ENCODE measurements at regions of chr14 and their contacts with region 1.

Region 1: DNA sequence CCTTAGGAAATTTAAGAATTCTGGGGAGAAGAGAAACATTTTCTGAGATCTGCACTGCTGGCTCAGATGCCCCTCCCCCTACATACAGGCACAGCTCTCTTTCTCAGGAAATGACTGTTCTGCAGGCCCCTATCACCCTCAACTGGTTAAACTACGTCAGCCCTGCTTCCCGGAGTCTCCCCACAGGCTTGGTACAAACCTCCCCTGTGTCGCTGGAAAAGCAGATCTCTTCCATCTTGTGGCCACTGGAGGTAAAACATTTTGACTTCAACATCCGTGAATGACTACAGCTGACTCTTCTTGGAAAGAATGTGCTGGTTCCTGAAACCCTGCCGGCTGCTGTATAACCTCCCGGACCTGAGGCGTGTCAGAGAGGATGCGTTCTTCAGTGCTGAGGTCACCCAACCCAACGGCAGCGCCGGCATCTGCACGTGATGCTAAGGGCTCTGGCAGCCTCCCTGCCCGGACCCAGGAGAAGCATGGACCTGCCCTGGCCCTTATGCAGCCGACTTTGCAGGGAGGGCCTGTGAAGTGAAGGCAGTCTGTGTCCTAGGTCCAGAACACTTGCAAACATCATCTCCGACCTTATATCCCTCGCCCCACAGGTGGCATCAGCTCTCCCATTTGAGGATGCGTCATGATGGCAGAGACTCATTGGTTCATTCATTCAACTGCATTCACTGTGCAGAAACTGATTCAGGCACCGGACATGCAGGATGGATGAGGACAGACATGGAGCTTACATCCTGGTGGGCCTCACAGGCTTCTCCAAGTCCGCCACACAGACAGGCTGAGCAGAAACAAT is 129.3 kb downstream of the GCH1 start:
- DNase-seq: peak; percentile 93
- ATAC-seq: peak; percentile 83
- H3K4me3 Mint-ChIP-seq: peak overlapping the region; percentile 16
- H3K27ac Mint-ChIP-seq: peak overlapping the region; percentile 79
- H3K4me1 Mint-ChIP-seq: peaks cover 47% of the 10 kb centered on the region
- H3K27me3 Mint-ChIP-seq: peaks cover 9% of the 10 kb centered on the region
- CTCF ChIP-seq: no peak

Region 2: DNA sequence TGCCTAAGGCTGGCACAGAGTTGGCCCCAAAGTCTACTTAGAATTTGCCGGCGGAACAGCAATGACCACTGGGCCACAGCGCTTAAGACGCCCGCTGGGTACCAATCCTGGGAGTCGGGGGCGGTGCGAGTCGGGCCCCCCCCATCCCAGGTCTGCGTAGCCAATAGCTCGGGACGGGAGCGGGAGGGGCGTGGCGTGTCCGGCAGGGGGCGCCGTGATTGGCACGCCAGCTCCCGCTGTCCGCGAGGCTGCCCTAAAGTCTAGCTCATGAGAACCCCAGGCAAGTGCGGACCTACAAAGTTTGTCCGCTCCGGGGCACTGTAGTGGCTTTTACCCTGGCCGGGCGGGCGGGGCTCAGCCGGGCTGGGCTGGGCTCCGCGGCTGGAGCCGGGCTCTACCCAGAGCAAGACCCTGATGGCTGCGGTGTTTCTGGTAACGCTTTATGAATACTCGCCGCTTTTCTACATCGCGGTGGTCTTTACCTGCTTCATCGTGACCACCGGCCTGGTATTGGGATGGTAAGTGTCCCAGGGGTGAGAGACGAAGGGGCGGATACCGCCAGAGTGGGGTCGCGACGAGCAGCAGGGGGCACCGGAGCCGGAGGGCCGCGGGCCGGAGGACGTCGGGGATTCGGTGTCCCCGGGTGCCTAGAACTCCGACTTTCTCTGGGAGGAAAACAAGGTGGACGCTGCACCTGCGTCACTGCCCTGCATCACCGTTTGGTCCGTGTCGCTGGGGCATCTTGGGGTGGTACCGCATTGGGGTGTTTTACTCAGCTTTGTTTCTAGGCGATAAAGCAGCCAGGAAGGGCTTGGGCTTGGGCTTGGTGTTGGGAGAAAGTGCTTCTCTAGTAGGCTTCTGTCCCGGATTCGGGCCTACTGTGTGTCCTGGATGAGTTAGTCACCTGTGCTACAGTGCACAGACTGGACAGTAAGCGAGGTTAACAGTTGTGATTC is 263.5 kb before region 1 on chr14 and contains the start of gene CGRRF1:
- CTCF ChIA-PET with region 1: interaction called, 20 read pairs
- POLR2A ChIA-PET with region 1: no interaction called
- intact Hi-C with region 1: no loop called
- DNase-seq: peak; percentile 99
- ATAC-seq: peak; percentile 98
- H3K4me3 Mint-ChIP-seq: peak within 1 kb of the TSS; percentile 92
- H3K27ac Mint-ChIP-seq: peak within 1 kb of the TSS; percentile 82
- H3K4me1 Mint-ChIP-seq: peaks cover 39% of the 10 kb centered on the region
- H3K27me3 Mint-ChIP-seq: peaks cover 2% of the 10 kb centered on the region
- CTCF ChIP-seq: no peak
- total RNA-seq, gene CGRRF1: 9.6 to 10.0 TPM

Region 3: DNA sequence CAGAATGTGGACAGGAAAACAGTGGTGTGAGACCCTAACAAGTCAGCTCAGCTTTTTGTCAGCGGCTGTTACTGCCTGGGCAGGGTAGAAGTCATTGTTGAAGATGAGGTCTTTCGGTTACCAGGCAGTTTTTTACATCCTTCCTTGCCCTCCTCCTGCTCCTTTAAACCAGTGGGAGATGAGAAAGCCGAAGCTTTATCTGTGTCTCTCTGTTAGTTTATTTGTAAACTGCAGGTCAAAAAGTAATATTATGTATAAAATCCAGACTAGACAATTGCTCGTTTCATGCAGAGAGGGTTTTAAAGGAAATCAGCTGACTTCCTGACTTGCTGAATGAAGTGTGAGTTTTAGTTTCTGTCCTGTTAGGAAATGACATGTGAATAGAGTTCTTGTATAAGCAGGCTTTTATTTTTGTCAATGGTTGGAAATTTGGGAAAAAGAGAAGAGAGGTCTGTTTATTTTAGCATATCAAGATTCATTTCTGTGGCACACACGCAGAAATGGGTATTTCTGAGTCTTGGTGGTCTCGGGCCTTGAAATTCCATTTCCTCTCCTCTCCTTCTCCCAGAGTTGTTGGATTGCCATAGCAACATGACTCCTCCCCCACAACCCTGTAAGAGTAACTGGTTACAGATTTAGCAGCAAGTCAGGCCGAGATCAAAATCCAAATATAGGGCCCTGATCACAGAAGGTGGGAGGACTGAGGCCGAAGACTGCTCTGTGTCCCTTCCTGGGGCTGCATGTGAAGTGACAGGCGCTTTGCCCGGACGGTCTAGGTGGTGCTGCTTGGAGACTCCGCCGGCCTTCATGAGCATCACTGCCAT is 145.6 kb before region 1 on chr14:
- CTCF ChIA-PET with region 1: interaction called, 10 read pairs
- POLR2A ChIA-PET with region 1: no interaction called
- intact Hi-C with region 1: no loop called
- DNase-seq: peak; percentile 52
- ATAC-seq: peak; percentile 76
- H3K4me3 Mint-ChIP-seq: peak overlapping the region; percentile 63
- H3K27ac Mint-ChIP-seq: peak overlapping the region; percentile 96
- H3K4me1 Mint-ChIP-seq: peaks cover 45% of the 10 kb centered on the region
- H3K27me3 Mint-ChIP-seq: no peaks in the 10 kb centered on the region
- CTCF ChIP-seq: no peak

Region 4: DNA sequence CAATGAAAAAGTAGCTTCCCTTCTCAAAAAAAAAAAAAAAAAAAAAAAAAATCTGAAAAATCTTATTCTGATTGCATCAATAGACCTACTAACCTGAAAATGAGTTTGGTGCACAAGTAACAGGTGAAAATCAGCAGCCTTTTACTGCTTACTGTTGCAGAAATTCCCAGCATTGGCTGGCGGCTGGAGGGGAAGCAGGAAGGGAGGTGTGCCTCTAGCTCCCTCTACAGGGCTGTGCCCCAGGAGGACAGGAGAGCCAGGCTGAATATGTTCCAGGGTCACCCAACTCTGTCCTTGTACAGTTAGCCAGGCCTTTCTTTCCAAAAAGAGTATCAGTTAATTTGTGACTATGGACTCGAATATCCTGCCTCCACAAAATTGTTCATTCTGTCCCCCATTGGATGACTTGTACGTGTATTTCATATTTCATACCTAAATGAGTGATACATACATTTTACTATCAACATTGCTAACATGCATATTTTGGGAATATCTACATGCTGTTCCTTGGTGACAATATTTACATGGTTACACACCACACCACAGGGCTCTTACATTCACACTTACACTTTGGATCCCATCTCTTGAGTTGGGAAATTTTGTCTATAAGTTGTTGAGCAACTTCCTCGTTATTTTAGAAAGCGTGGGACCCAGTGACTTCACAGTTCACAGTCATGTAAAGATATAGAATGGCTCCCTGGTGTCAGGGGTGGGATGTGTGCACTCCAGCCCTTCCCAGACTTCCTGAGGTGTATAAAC is 81.7 kb before region 1 on chr14:
- CTCF ChIA-PET with region 1: interaction called, 22 read pairs
- POLR2A ChIA-PET with region 1: no interaction called
- intact Hi-C with region 1: no loop called
- DNase-seq: peak; percentile 70
- ATAC-seq: peak; percentile 64
- H3K4me3 Mint-ChIP-seq: no peak overlapping the region
- H3K27ac Mint-ChIP-seq: no peak overlapping the region
- H3K4me1 Mint-ChIP-seq: peaks cover 24% of the 10 kb centered on the region
- H3K27me3 Mint-ChIP-seq: peaks cover 30% of the 10 kb centered on the region
- CTCF ChIP-seq: peak; percentile 76

Region 5: DNA sequence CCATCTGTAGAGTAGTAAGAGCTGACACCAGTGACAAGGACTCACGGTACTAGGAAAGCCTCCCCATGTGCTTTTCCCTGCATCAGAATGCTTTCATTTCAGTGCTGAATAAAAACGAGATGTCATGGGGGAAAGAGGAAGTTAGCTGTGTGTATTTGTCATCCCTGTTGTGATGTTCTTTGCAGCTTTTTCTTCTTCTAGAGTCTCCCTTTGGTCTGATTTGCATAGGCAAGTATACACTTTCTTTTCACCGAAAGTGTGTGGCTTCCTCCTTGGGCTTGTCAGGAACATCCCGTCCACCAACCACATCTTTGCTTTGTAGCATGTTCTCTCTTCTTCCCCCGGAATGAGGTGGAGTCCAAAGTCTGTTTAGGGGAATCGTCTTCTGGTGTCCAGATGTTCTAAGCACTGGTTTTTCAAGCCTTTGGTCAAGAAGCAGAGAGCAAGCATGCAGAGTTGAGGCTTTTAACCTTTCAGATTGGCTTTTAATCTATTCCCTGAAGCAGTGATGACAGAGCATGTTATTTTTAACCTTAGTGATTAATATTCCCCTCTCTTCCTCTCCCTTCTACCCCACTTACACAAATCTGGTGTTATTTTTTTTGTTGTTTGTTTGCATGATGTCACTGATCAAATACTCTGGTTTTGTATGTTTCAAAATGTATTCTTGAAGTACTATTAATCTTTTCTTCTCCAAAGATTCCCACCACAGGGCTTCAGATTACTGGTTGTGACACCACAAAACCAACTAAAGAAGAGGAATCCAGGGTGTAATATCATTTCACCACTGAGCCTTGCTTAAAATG is 43.0 kb before region 1 on chr14:
- CTCF ChIA-PET with region 1: interaction called, 63 read pairs
- POLR2A ChIA-PET with region 1: interaction called, 4 read pairs
- intact Hi-C with region 1: loop called (anchors 1 kb)
- DNase-seq: peak; percentile 63
- ATAC-seq: peak; percentile 86
- H3K4me3 Mint-ChIP-seq: peak overlapping the region; percentile 60
- H3K27ac Mint-ChIP-seq: peak overlapping the region; percentile 90
- H3K4me1 Mint-ChIP-seq: peaks cover 45% of the 10 kb centered on the region
- H3K27me3 Mint-ChIP-seq: peaks cover 16% of the 10 kb centered on the region
- CTCF ChIP-seq: no peak

Region 6: GRCh38 chr14:54792288-54792687 is 18.9 kb after region 1 on chr14:
- CTCF ChIA-PET with region 1: interaction called, 20 read pairs
- POLR2A ChIA-PET with region 1: interaction called, 4 read pairs
- intact Hi-C with region 1: no loop called
- DNase-seq: no peak
- ATAC-seq: no peak
- H3K4me3 Mint-ChIP-seq: no peak overlapping the region
- H3K27ac Mint-ChIP-seq: no peak overlapping the region
- H3K4me1 Mint-ChIP-seq: no peaks in the 10 kb centered on the region
- H3K27me3 Mint-ChIP-seq: no peaks in the 10 kb centered on the region
- CTCF ChIP-seq: no peak

Region 7: GRCh38 chr14:54839701-54840119 is 66.3 kb after region 1 on chr14:
- CTCF ChIA-PET with region 1: no interaction called
- POLR2A ChIA-PET with region 1: no interaction called
- intact Hi-C with region 1: no loop called
- DNase-seq: no peak
- ATAC-seq: no peak
- H3K4me3 Mint-ChIP-seq: no peak overlapping the region
- H3K27ac Mint-ChIP-seq: no peak overlapping the region
- H3K4me1 Mint-ChIP-seq: no peaks in the 10 kb centered on the region
- H3K27me3 Mint-ChIP-seq: no peaks in the 10 kb centered on the region
- CTCF ChIP-seq: no peak

Region 8: GRCh38 chr14:54857830-54858269 is 84.5 kb after region 1 on chr14:
- CTCF ChIA-PET with region 1: no interaction called
- POLR2A ChIA-PET with region 1: no interaction called
- intact Hi-C with region 1: no loop called
- DNase-seq: no peak
- ATAC-seq: no peak
- H3K4me3 Mint-ChIP-seq: no peak overlapping the region
- H3K27ac Mint-ChIP-seq: no peak overlapping the region
- H3K4me1 Mint-ChIP-seq: peaks cover 18% of the 10 kb centered on the region
- H3K27me3 Mint-ChIP-seq: no peaks in the 10 kb centered on the region
- CTCF ChIP-seq: no peak